Left ventricle myocardium inferior (tissue), 1 donor: ENCODE measurements at regions of chr12 and their contacts with region 1.

Region 1: GRCh38 chr12:62603061-62603810 is 136.6 kb downstream of the MON2 start:
- DNase-seq: peak; percentile 87
- H3K4me3 ChIP-seq: peak overlapping the region; percentile 86
- H3K27ac ChIP-seq: peak overlapping the region; percentile 100
- H3K4me1 ChIP-seq: peaks cover 39% of the 10 kb centered on the region
- H3K27me3 ChIP-seq: no peaks in the 10 kb centered on the region
- CTCF ChIP-seq: peak; percentile 71

Region 2: GRCh38 chr12:62793256-62794217 is 190.3 kb after region 1 on chr12:
- intact Hi-C with region 1: loop called (anchors 5 kb)
- DNase-seq: peak; percentile 86
- H3K4me3 ChIP-seq: no peak overlapping the region
- H3K27ac ChIP-seq: peak overlapping the region; percentile 64
- H3K4me1 ChIP-seq: peaks cover 43% of the 10 kb centered on the region
- H3K27me3 ChIP-seq: no peaks in the 10 kb centered on the region
- CTCF ChIP-seq: peak; percentile 97

Region 3: GRCh38 chr12:62873116-62873742 is 270.0 kb after region 1 on chr12:
- intact Hi-C with region 1: no loop called
- DNase-seq: no peak
- H3K4me3 ChIP-seq: no peak overlapping the region
- H3K27ac ChIP-seq: no peak overlapping the region
- H3K4me1 ChIP-seq: peaks cover 20% of the 10 kb centered on the region
- H3K27me3 ChIP-seq: no peaks in the 10 kb centered on the region
- CTCF ChIP-seq: no peak